Common myeloid progenitor, CD34-positive (primary cell): ENCODE measurements at regions of chr5 and their contacts with region 1.

Region 1: GRCh38 chr5:4295663-4296339 is 700.2 kb downstream of the IRX1 start:
- DNase-seq: peak; percentile 47 to 70 (median 62)
- H3K4me3 ChIP-seq: no peak overlapping the region
- H3K27ac ChIP-seq: no peak overlapping the region
- H3K4me1 ChIP-seq: no peaks in the 10 kb centered on the region
- H3K27me3 ChIP-seq: peaks cover 0 to 4% (median 2%) of the 10 kb centered on the region in 5 experiments

Region 2: DNA sequence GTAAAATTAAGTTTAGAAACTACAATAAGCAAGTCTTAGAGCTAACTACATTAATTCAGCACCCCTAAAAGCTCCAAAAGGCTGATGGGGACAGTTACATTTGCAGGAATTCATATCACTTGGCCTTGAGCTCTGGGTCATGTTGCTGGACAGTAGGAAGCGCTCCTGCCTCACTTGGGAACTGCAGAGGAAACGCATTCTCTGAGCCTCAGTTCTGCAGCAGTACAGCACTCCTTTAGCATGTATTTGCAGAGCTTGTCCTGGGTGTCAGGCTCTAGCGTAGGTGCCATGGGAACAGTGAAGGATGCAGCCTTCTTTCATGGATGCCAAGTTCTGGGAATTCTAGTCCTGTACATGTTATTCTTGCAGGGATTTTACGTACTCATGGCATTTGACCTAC is 10.3 kb after region 1 on chr5:
- CTCF ChIA-PET with region 1: interaction called, 11 read pairs
- POLR2A ChIA-PET with region 1: no interaction called
- DNase-seq: no peak
- H3K4me3 ChIP-seq: no peak overlapping the region
- H3K27ac ChIP-seq: no peak overlapping the region
- H3K4me1 ChIP-seq: no peaks in the 10 kb centered on the region
- H3K27me3 ChIP-seq: no peaks in the 10 kb centered on the region